Cardiac septum (tissue), 1 donor: ENCODE measurements at regions of chr6 and their contacts with region 1.

Region 1: GRCh38 chr6:149863697-149864577 is at the start of gene LRP11:
- DNase-seq: peak; percentile 91
- total RNA-seq, gene LRP11: 11.6 TPM

Region 2: GRCh38 chr6:149834513-149835481 is 29.1 kb before region 1 on chr6:
- intact Hi-C with region 1: loop called (anchors 5 kb)
- DNase-seq: no peak

Region 3: DNA sequence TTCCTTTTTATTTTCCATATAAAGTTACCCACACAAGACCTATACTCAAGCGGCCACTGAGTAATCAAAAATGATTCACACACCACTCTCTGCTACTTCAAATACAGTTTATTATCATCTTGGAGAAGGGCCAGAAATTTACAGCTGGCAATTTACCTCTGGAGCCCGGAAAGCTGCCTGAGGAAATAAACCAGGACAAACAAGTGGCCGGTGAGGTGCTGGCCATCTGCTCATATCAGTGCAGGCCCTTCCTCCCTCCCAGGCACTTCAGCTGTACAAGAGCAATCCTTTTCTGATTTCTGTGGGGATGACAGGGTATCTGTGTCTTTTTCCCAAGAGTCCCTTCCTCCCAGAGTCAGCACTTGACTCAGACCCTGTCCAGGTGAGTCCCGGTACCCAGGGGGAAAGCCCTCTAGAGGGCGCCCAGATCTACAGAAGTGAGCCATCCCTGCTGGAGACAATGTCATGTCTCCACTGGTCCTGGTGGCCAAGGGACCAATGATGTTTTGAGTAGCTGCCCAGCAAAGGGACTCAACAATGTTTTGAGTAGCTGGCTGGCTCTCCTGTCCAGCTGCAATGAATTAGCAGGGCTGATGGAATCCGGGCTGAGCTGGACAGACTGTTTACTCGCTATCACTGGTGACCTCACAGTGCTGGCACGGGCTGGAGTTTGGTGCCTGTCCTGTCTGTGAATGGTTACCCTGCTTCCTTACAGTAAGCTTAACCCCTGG is 23.4 kb before region 1 on chr6:
- intact Hi-C with region 1: loop called (anchors 1 kb)
- DNase-seq: peak; percentile 83

Region 4: GRCh38 chr6:149925974-149926777 is 62.2 kb after region 1 on chr6:
- intact Hi-C with region 1: loop called (anchors 2 kb)
- DNase-seq: peak; percentile 92